ENCODE measurements at regions of chr17 and their contacts with region 1.

Region 1: DNA sequence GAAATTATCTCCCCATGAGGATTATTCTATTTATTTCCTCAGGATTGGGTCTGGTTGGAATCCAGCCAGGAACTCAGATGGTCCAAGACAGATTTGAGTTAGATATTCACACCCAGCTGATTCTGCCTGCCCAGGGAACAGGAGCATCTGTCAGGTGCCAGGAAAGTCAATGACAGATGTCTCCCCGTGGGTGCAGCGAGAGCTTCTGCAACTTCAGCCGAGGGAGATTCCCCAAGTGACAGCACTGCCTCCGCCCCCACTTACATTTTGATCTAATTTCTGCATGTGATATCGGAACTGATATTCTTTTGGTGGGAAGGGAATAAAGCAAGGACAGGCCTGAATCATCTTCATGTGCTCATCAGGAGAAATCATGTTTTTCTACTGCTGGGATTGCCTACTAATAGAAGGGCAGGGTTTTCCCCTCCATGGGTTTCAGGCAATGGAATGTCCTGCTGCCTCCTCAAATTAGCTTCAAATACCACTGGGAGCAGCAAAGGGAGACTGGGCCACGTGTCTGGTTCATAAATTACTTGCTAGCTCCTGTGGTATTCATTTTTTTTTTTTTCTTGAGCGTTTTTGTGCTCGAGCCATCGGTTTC is 15.7 kb upstream of the DHX8 start:
- DNase-seq: no peak
- ATAC-seq: no peak
- H3K4me3 ChIP-seq: no peak overlapping the region
- H3K27ac ChIP-seq: peak overlapping the region; percentile 94
- H3K4me1 ChIP-seq: peaks cover 79% of the 10 kb centered on the region
- H3K27me3 ChIP-seq: no peaks in the 10 kb centered on the region
- CTCF ChIP-seq: no peak
- EP300 ChIP-seq: no peak
- POLR2A ChIP-seq: no peak
- RAD21 ChIP-seq: no peak

Region 2: DNA sequence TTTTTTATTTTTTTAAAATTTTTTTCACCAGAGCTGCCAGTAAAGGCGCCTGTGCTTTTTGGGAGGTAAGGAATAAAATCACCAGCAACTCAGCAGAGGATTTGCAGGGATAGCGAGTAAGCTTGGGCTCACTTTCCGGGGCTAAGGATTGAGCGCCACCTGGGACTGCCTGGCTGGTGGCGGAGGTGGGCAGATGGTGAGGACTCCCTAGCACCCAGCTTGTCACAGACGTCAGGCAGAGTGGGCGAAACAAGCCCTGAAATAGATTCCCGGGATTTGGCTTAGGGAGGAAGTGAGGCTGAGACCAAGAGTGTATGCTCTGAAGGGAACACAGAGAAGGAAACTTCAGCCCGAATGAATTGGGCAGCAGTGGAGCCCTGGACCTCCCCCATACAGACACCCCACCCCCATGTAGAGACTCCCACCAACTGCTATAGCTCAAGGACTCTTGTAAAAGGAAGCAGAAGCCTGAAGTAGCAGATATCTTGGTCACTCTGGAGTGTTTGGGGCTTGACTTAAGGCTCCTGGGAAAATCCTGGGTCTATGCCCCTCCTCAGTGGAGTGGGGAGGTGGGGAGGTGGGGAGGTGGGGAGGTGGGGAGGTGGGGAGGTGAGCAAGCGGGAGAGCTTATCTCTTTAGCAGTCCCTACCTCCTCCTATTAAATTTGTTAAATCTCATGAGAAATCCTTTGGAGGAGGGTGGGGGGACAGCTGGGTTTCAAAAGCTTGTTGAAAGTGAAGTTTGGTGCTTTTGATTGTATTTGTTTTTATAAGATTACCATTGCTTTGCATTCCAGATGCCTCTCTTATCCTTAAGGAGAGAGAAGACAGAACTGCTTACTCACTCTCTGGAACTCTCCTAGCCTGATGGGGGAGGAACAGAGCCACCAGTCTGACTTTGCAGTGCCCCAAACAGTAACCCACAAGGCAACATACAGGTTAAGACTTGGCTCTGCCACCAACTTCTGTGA is 61.1 kb before region 1 on chr17:
- CTCF ChIA-PET with region 1: no interaction called
- POLR2A ChIA-PET with region 1: interaction called, 6 read pairs
- in situ Hi-C with region 1: no loop called
- intact Hi-C with region 1: loop called (anchors 5 kb)
- DNase-seq: no peak
- ATAC-seq: no peak
- H3K4me3 ChIP-seq: no peak overlapping the region
- H3K27ac ChIP-seq: no peak overlapping the region
- H3K4me1 ChIP-seq: peaks cover 64% of the 10 kb centered on the region
- H3K27me3 ChIP-seq: no peaks in the 10 kb centered on the region
- CTCF ChIP-seq: no peak
- EP300 ChIP-seq: no peak
- POLR2A ChIP-seq: no peak
- RAD21 ChIP-seq: no peak

Region 3: DNA sequence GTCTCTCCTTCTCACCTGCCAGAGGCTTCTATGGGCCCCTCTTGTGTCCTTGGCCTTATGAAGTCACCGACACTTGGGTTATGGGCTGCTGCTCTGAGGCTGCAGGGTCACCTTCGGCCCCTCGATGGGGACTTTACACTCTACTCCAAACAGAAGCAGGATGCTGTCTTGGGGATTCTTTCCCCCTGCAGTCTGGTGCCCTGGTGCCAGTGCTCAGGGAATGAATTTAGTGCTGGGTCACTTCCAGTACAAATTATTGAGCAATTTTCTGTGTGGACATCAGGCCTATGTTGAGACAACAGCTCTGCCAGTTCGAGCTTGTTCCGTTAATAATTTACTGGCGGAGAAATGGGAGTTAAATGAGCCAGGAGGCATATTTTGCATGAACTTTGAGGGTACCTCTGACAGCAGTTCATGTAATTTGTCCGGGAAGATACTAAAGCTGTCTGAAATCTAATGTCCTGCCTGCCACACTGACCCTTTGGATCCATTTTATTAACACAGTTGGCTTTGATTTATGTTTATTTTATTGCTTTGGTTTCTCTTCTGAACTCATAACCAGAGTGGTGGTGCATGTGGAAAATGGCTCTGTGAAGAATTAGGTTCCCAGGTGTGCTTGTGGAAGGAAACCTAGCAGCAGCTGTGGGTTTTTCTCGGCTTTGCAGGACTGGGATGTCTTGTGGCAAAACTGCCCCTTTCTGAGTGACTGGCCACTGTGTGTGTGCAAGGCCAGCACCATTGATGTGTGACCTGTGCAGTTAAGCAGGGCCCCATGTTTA is 18.4 kb before region 1 on chr17:
- CTCF ChIA-PET with region 1: no interaction called
- POLR2A ChIA-PET with region 1: interaction called, 18 read pairs
- in situ Hi-C with region 1: no loop called
- intact Hi-C with region 1: loop called (anchors 1 kb)
- DNase-seq: peak; percentile 97
- ATAC-seq: peak; percentile 96
- H3K4me3 ChIP-seq: peak overlapping the region; percentile 15 to 52 (median 32); a peak in 5 of 6 replicates
- H3K27ac ChIP-seq: peak overlapping the region; percentile 89
- H3K4me1 ChIP-seq: peaks cover 52% of the 10 kb centered on the region
- H3K27me3 ChIP-seq: no peaks in the 10 kb centered on the region
- CTCF ChIP-seq: peak; percentile 1; the same call in 1 of the 2 replicates
- EP300 ChIP-seq: peak; percentile 82 to 91
- POLR2A ChIP-seq: no peak
- RAD21 ChIP-seq: no peak

Region 4: GRCh38 chr17:43456661-43457361 is 11.3 kb before region 1 on chr17:
- CTCF ChIA-PET with region 1: no interaction called
- POLR2A ChIA-PET with region 1: interaction called, 65 read pairs
- in situ Hi-C with region 1: no loop called
- intact Hi-C with region 1: loop called (anchors 1 kb)
- DNase-seq: peak; percentile 100
- ATAC-seq: peak; percentile 95
- H3K4me3 ChIP-seq: peak overlapping the region in 1 of 3 experiments; percentile 17; a peak in 1 of 6 replicates
- H3K27ac ChIP-seq: peak overlapping the region; percentile 83
- H3K4me1 ChIP-seq: peaks cover 79% of the 10 kb centered on the region
- H3K27me3 ChIP-seq: no peaks in the 10 kb centered on the region
- CTCF ChIP-seq: peak; percentile 37
- EP300 ChIP-seq: peak; percentile 79 to 99; a peak in 3 of 4 replicates
- POLR2A ChIP-seq: peak; percentile 60 to 68
- RAD21 ChIP-seq: peak; percentile 57; the same call in 1 of the 2 replicates